GM12878 (cell line): ENCODE measurements at regions of chr1 and their contacts with region 1.

Region 1: DNA sequence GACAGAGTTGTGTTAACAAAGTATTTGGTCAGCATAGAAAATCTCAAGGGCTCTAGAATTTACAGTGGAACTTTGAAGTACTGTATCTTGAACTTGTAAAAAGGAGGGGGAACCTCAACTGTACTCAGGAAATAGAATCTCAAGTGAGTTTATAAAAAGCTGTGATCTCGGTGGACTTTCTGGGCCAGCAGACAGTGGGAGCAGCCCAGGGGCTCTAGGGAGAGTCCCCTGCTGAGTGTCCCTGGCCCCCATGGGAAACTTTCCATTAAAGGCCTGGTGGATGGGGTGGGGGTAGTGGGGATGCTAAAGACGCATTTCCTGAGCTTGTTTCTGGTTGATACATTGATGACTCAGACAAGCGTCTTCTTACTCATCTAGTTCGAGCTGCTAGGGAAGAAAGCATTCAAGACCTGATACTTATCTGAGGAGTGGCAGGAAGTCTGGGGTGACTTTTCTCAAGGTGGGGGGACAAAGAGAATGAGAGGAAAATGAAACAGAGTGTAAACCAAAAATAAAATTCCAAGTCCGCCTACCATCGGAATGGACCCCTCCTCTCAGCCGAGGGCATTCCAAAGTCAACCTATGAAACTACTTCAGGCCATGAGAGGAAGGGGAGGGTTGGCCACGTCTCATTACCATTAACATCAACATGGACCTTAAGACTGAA is 65.5 kb downstream of the NID1 start:
- DNase-seq: peak; percentile 96
- ATAC-seq: peak; percentile 81
- H3K4me3 ChIP-seq: peak overlapping the region; percentile 46; the same call in 1 of the 2 replicates
- H3K27ac ChIP-seq: peak overlapping the region; percentile 97
- H3K4me1 ChIP-seq: peaks cover 58% of the 10 kb centered on the region
- H3K27me3 ChIP-seq: no peaks in the 10 kb centered on the region
- CTCF ChIP-seq: no peak
- EP300 ChIP-seq: peak; percentile 92 to 94; a peak in 3 of 4 replicates
- POLR2A ChIP-seq: no peak; the same call in 1 of the 2 replicates
- RAD21 ChIP-seq: peak; percentile 15; the same call in 1 of the 2 replicates

Region 2: DNA sequence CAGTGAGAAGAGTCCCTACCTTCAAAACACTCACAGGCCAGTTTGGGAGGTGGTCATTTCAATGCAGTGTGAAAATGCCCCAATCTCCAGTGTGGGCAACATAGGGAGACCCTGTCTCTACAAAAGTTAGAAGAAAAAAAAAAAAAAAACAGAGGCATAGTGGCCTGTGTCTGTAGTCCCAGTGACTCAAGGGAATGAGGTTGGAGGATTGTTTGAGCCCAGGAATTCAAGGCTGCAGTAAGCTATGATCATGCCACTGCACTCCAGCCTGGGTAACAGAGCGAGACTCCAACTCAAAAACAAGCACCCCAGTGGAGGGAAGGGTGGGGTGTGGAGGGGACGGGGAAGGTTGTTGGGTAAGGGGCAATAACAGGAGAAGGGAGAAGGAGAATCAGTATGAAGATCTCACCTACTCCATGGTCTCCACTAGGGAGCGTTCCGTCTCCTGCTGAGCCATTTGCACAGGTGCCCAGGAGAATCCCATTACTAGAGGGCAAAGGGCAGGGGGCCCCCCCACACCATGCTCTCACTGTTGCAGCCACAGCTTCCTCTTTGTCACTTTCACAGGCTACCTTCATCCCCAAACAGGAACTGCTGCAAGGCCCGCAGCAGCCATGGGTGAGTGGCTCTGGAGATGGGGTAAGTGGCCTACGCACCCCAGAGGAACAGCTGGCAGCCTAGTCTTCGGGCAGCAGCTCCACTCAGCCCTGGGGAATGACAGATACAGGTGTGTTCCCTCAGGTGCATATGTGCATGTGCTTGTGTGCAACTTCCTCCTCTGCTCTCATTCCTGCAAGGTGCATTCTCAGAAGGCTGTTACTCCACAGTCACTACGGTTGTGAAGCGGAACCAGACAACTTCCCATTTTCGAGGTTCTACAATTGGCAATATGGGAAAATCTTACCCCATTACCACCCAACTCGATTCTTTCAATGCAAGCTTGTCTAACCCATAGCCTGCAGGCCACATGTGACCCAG is 44.8 kb before region 1 on chr1:
- CTCF ChIA-PET with region 1: no interaction called
- POLR2A ChIA-PET with region 1: interaction called, 6 read pairs
- RAD21 ChIA-PET with region 1: interaction called, 3 read pairs
- SMC1A ChIA-PET with region 1: interaction called, 4 read pairs
- in situ Hi-C with region 1: no loop called
- intact Hi-C with region 1: loop called (anchors 1 kb)
- DNase-seq: peak; percentile 87
- ATAC-seq: peak; percentile 94
- H3K4me3 ChIP-seq: no peak overlapping the region
- H3K27ac ChIP-seq: peak overlapping the region; percentile 73
- H3K4me1 ChIP-seq: peaks cover 37% of the 10 kb centered on the region
- H3K27me3 ChIP-seq: no peaks in the 10 kb centered on the region
- CTCF ChIP-seq: peak; percentile 27 to 35 (median 33); a peak in 4 of 6 replicates
- EP300 ChIP-seq: peak; percentile 80 to 93
- POLR2A ChIP-seq: no peak
- RAD21 ChIP-seq: peak; percentile 16

Region 3: GRCh38 chr1:236058141-236058934 is 58.9 kb after region 1 on chr1:
- CTCF ChIA-PET with region 1: interaction called, 4 read pairs
- POLR2A ChIA-PET with region 1: interaction called, 5 read pairs
- RAD21 ChIA-PET with region 1: interaction called, 3 read pairs
- SMC1A ChIA-PET with region 1: interaction called, 17 read pairs
- in situ Hi-C with region 1: no loop called
- intact Hi-C with region 1: no loop called
- DNase-seq: peak; percentile 83
- ATAC-seq: peak; percentile 92
- H3K4me3 ChIP-seq: peak overlapping the region; percentile 12; the same call in 1 of the 2 replicates
- H3K27ac ChIP-seq: peak overlapping the region; percentile 68
- H3K4me1 ChIP-seq: peaks cover 7% of the 10 kb centered on the region
- H3K27me3 ChIP-seq: no peaks in the 10 kb centered on the region
- CTCF ChIP-seq: no peak
- EP300 ChIP-seq: no peak
- POLR2A ChIP-seq: no peak
- RAD21 ChIP-seq: no peak

Region 4: DNA sequence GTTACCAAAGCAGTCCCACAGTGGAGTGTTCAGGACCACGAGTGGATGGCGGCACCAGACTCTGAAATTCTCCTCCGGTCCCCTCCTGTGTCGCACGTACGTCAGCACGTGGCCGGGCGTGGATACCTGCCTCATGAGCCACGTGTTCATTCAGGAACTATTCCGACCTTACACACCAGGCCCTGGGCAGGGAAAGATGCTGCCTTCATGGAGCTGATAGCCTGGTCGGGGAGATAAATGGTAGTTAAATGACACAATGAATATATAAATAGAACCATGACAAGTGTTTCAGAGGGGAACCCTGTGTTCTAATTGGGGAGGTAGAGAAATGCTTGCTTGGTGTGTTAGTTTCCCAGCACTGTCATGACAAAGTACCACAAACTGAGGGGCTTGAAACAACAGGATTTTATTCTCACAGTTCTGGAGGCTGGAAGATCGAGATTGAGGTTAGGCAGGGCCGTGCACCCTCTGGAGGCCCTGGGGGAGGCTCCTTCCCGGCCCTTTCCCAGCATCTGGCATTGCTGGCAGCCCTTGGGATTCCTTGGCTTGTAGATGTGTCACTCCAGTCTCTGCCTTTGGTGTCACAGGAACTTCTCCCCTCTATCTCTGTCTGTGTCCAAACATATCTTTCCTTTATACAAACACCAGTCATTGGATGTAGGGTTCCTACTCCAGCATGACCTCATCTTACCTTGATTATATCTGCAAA is 114.1 kb after region 1 on chr1:
- CTCF ChIA-PET with region 1: no interaction called
- POLR2A ChIA-PET with region 1: no interaction called
- RAD21 ChIA-PET with region 1: no interaction called
- SMC1A ChIA-PET with region 1: no interaction called
- in situ Hi-C with region 1: no loop called
- intact Hi-C with region 1: no loop called
- DNase-seq: no peak
- ATAC-seq: peak; percentile 47
- H3K4me3 ChIP-seq: no peak overlapping the region
- H3K27ac ChIP-seq: no peak overlapping the region
- H3K4me1 ChIP-seq: no peaks in the 10 kb centered on the region
- H3K27me3 ChIP-seq: no peaks in the 10 kb centered on the region
- CTCF ChIP-seq: no peak
- EP300 ChIP-seq: no peak
- POLR2A ChIP-seq: no peak
- RAD21 ChIP-seq: no peak

Region 5: GRCh38 chr1:236156512-236157208 is 157.3 kb after region 1 on chr1:
- CTCF ChIA-PET with region 1: no interaction called
- POLR2A ChIA-PET with region 1: no interaction called
- RAD21 ChIA-PET with region 1: interaction called, 3 read pairs
- SMC1A ChIA-PET with region 1: interaction called, 3 read pairs
- in situ Hi-C with region 1: no loop called
- intact Hi-C with region 1: loop called (anchors 2 kb)
- DNase-seq: peak; percentile 99
- ATAC-seq: peak; percentile 74
- H3K4me3 ChIP-seq: peak overlapping the region; percentile 46; the same call in 1 of the 2 replicates
- H3K27ac ChIP-seq: peak overlapping the region; percentile 99
- H3K4me1 ChIP-seq: peaks cover 61% of the 10 kb centered on the region
- H3K27me3 ChIP-seq: no peaks in the 10 kb centered on the region
- CTCF ChIP-seq: no peak
- EP300 ChIP-seq: peak; percentile 100
- POLR2A ChIP-seq: peak; percentile 67; the same call in 1 of the 2 replicates
- RAD21 ChIP-seq: 0 out of 2 replicates have a peak, but pooled peaks have one; percentile 4